Vagina (tissue), 2 donors: ENCODE measurements at regions of chr15 and their contacts with region 1.

Region 1: DNA sequence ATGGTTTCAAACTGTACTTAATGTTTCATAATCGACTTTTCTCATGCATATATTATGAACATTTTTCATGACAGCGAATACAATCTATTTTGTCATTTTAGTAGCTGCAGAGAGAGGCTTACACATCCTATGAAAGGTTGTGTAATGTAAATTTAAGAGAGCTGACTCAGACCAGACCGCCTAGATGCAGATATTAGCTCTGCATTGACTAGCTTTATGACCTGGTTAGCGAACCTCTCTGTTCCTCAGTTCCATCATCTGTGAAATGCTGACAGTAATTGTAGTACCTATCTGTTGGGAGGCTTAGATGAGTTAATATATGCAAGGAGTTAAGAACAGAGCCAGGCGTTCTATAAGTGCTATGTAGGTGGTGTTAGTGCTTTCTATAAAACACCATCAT is 116.2 kb upstream of the RASGRP1 start:
- DNase-seq: no peak
- H3K4me3 ChIP-seq: no peak overlapping the region
- H3K27ac ChIP-seq: no peak overlapping the region
- H3K4me1 ChIP-seq: no peaks in the 10 kb centered on the region
- H3K27me3 ChIP-seq: no peaks in the 10 kb centered on the region
- CTCF ChIP-seq: no peak
- POLR2A ChIP-seq: no peak

Region 2: DNA sequence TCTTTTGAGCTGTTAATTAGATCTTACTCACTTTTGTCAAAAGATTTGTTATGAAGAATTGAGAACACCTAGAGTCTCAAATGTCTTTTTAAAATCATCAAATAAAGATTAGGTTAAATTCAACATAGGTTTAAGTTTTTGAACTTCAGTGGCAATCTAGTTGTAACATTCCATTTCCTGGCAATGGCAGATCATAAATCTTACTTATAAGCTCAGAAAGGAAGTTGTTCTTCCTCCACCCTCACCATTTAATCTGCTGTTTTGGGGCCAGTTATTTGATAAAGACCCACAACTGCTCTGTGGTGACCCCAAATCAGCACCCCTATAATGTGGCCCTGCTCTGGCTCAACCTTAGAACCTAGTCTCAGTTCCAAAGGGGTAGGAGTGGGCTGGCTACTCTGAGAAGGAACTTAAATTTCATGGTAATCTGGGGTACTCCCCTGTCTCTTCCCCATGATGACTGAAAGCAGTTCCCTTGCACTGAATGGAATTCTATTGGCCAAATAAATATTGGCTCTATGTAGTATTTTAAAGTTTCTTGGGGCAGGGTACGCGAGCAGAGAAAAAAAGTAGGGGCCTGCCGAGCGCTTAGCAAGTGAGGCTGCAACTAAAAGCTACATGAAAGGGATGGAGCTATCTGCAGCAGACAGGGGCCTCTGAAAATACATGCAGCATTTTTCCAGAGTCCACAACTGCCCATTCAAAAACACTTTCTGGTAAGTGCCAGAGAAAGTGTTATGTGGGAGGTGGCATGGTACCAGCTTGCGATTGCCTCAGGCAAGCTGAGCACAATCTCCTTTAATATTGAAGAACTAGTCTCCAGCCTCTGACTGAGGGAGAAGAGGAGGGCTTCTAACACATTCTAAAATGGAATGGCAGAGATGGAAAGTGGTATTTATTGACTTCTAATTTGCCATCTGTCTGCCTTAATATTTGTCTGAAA is 12.6 kb before region 1 on chr15:
- intact Hi-C with region 1: loop called (anchors 2 kb)
- DNase-seq: no peak
- H3K4me3 ChIP-seq: no peak overlapping the region
- H3K27ac ChIP-seq: no peak overlapping the region
- H3K4me1 ChIP-seq: no peaks in the 10 kb centered on the region
- H3K27me3 ChIP-seq: no peaks in the 10 kb centered on the region
- CTCF ChIP-seq: no peak
- POLR2A ChIP-seq: no peak